Heart left ventricle (tissue), 16 donors: ENCODE measurements at regions of chr15 and their contacts with region 1.

Region 1: DNA sequence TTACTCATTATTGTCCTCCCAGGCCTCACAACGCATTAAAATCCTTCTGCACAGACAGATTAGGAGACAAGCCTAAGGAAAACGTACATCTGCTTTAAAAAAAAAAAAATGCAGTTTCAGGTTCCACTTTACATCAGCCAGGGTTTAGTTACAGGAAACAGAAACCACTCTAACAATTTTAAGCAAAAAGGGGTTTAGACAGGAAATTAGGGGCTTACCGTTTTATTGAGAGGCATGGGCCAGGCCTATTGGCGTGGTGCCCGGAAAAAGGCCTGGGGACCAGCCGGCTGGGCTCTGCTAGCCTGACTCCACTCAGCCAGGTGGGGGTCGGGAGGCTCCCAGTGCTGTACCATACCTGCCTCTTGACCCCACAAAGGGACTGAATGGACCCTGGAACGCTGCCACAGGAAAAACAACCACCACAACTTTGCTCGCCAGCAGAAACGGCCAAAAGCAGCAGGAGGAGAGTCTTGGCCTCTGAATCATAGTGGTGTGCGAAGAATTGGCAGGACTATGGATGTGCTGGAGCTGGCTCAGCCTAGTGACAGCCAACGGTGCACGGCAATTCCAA is 124.3 kb downstream of the CHSY1 start:
- DNase-seq: peak; percentile 78 to 87 (median 82)
- ATAC-seq: peak; percentile 89 to 97 (median 94)
- H3K4me3 ChIP-seq: peak overlapping the region in 1 of 12 donors; percentile 4
- H3K27ac ChIP-seq: peak overlapping the region; percentile 49 to 97 (median 72)
- H3K4me1 ChIP-seq: peaks cover 2 to 70% (median 16%) of the 10 kb centered on the region in 12 donors
- H3K27me3 ChIP-seq: peaks cover 0 to 3% (median 0%) of the 10 kb centered on the region in 9 donors
- CTCF ChIP-seq: no peak
- POLR2A ChIP-seq: no peak

Region 2: DNA sequence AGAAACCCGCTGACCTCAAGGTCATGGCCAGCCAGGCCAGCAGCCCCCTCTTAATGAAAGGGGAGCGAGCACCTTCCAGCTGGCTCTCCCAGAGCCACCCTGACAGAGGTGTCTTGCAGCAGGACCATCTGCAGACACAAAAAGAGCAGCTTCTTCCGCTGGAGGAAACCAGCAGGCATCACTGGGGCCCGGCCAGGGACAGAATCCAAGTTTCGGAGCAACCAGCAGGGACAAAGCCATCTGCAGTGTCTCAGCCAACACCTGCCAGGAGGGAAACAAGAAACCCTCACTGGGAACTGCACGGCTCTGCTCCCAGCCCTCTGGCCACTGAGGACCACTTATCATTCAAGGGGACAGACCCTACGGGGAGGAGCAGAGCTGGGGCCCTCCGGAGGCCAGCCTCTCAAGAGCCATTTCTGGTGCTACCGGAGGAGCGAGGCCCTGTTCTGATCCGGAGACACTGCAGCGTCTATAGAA is 35.1 kb after region 1 on chr15:
- intact Hi-C with region 1: loop called in 4 of 10 experiments (anchors 5 kb)
- DNase-seq: peak; percentile 83 to 93 (median 86)
- ATAC-seq: peak; percentile 92 to 96 (median 94)
- H3K4me3 ChIP-seq: no peak overlapping the region
- H3K27ac ChIP-seq: peak overlapping the region in 11 of 12 donors; percentile 29 to 73 (median 55)
- H3K4me1 ChIP-seq: peaks cover 0 to 34% (median 15%) of the 10 kb centered on the region in 12 donors
- H3K27me3 ChIP-seq: no peaks in the 10 kb centered on the region
- CTCF ChIP-seq: no peak
- POLR2A ChIP-seq: no peak

Region 3: DNA sequence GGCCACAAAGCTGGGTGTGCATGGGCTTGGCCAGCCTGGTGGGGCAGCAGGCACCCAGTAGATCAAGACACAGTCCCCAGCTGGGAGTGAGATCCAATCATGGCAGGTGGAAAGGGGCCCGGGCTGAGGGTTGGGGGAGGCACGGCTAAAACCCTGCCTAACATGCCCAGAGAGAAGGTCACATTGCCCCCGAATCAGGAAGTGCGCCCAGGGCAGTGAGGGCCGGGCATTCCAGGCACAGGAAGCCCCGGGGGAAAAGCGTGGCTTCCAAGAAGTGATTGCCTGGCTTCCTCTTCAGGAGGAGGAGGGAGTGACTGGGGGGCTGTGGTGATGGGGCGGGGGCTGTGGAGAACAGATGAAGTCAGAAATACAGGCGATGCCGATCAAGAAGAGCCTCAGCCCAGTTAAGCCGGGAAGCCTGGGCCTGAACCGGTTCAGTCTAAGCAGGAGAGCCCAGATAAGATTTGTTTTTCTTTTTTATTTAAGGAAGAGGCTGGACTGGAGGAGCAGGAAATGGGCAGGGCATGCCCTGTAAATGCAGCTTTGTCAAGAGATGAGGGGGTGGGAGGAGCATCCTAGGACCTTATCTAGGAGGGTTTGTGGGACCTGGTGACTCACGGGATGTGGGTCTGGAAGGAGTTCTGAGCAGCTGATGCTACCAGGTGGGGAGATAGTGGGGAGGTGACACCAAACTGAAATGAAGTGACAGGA is 40.3 kb after region 1 on chr15:
- intact Hi-C with region 1: loop called in 5 of 10 experiments (anchors 5 kb)
- DNase-seq: peak; percentile 77 to 88 (median 83)
- ATAC-seq: peak; percentile 75 to 84 (median 81)
- H3K4me3 ChIP-seq: peak overlapping the region in 6 of 12 donors; percentile 6 to 31 (median 15)
- H3K27ac ChIP-seq: peak overlapping the region; percentile 79 to 99 (median 85)
- H3K4me1 ChIP-seq: peaks cover 0 to 70% (median 23%) of the 10 kb centered on the region in 12 donors
- H3K27me3 ChIP-seq: no peaks in the 10 kb centered on the region
- CTCF ChIP-seq: peak in 1 of 12 donors; percentile 14
- POLR2A ChIP-seq: no peak

Region 4: GRCh38 chr15:101201406-101202174 is 74.0 kb after region 1 on chr15:
- intact Hi-C with region 1: loop called in 1 of 10 experiments (anchors 10 kb)
- DNase-seq: peak; percentile 84 to 93 (median 91)
- ATAC-seq: peak; percentile 89 to 96 (median 94)
- H3K4me3 ChIP-seq: no peak overlapping the region
- H3K27ac ChIP-seq: peak overlapping the region in 9 of 12 donors; percentile 37 to 85 (median 58)
- H3K4me1 ChIP-seq: peaks cover 3 to 86% (median 57%) of the 10 kb centered on the region in 12 donors
- H3K27me3 ChIP-seq: no peaks in the 10 kb centered on the region
- CTCF ChIP-seq: no peak
- POLR2A ChIP-seq: peak in 1 of 2 donors; percentile 49